ENCODE measurements at regions of chr5 and their contacts with region 1.

Region 1: GRCh38 chr5:128905571-128906110 is 59.6 kb upstream of the SLC27A6 start:
- DNase-seq: peak; percentile 90
- H3K4me3 Mint-ChIP-seq: no peak overlapping the region
- H3K27ac Mint-ChIP-seq: no peak overlapping the region
- H3K4me1 Mint-ChIP-seq: no peaks in the 10 kb centered on the region
- H3K27me3 Mint-ChIP-seq: no peaks in the 10 kb centered on the region
- CTCF ChIP-seq: peak; percentile 85

Region 2: GRCh38 chr5:128920345-128921215 is 14.9 kb after region 1 on chr5:
- CTCF ChIA-PET with region 1: interaction called, 11 read pairs
- POLR2A ChIA-PET with region 1: no interaction called
- intact Hi-C with region 1: no loop called
- DNase-seq: peak; percentile 79
- H3K4me3 Mint-ChIP-seq: no peak overlapping the region
- H3K27ac Mint-ChIP-seq: no peak overlapping the region
- H3K4me1 Mint-ChIP-seq: peaks cover 8% of the 10 kb centered on the region
- H3K27me3 Mint-ChIP-seq: peaks cover 7% of the 10 kb centered on the region
- CTCF ChIP-seq: no peak

Region 3: DNA sequence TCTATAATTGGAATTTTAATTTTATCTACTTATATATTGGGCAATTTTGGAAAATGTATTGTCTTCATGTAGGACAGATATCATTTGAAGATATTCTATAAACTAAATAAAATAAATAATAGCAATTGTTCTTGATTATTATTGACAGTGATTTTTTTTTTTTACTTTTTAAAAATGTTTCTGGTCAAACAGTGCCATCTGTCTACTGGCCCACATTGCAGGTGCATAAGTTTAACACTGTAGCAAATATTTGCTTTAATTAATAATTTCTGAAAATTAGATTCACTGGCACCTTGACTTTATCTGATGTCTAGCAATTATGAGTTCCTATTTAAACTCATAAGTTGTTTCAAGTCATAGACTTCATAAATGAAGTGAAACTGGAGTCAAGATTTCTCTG is 147.8 kb after region 1 on chr5:
- CTCF ChIA-PET with region 1: no interaction called
- POLR2A ChIA-PET with region 1: interaction called, 3 read pairs
- intact Hi-C with region 1: loop called (anchors 1 kb)
- DNase-seq: no peak
- H3K4me3 Mint-ChIP-seq: no peak overlapping the region
- H3K27ac Mint-ChIP-seq: no peak overlapping the region
- H3K4me1 Mint-ChIP-seq: peaks cover 7% of the 10 kb centered on the region
- H3K27me3 Mint-ChIP-seq: peaks cover 2% of the 10 kb centered on the region
- CTCF ChIP-seq: no peak

Region 4: DNA sequence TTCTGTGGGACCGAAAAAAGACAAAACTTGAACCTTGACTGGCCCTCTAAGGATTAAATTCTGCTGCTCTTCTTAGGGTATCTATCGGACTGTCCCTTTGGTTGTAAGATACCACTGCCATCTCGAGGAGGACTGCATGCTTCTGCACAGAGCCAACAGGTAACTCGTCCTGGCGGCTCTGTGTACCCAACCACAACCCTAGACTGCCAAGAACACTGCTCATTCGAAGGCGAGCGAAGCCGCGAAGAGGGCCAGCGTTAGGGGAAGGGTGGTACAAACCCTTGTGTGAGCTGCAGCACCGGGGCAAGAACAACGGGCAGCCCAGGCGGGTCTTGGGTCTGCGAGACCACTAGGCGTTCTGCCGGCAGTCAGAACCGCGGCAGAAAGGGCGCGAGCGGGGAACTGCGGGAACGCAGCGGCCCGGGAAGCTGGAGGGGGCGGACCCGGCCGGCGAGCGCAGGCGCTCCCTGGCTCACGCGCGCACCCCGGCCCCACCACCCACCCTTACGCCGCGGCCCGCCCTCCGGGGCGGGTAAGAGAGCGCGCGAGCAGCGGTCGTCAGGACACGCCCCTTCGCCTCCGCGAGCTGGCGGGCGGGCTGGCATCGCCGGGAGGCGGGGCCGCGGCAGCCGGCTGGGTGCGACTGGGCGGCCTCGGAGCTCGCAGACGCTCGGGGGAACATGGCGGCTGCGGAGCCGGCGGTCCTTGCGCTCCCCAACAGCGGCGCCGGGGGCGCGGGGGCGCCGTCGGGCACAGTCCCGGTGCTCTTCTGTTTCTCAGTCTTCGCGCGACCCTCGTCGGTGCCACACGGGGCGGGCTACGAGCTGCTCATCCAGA is 188.7 kb after region 1 on chr5 and contains the start of gene ISOC1:
- CTCF ChIA-PET with region 1: interaction called, 33 read pairs
- POLR2A ChIA-PET with region 1: interaction called, 5 read pairs
- intact Hi-C with region 1: loop called (anchors 1 kb)
- DNase-seq: peak; percentile 94
- H3K4me3 Mint-ChIP-seq: peak within 1 kb of the TSS; percentile 84
- H3K27ac Mint-ChIP-seq: peak within 1 kb of the TSS; percentile 46
- H3K4me1 Mint-ChIP-seq: peaks cover 20% of the 10 kb centered on the region
- H3K27me3 Mint-ChIP-seq: peaks cover 21% of the 10 kb centered on the region
- CTCF ChIP-seq: no peak
- total RNA-seq, gene ISOC1: 11.2 and 12.8 TPM in 2 replicates

Region 5: GRCh38 chr5:129125810-129126209 is 220.2 kb after region 1 on chr5:
- CTCF ChIA-PET with region 1: interaction called, 7 read pairs
- POLR2A ChIA-PET with region 1: no interaction called
- intact Hi-C with region 1: loop called (anchors 1 kb)
- DNase-seq: no peak
- H3K4me3 Mint-ChIP-seq: no peak overlapping the region
- H3K27ac Mint-ChIP-seq: no peak overlapping the region
- H3K4me1 Mint-ChIP-seq: peaks cover 8% of the 10 kb centered on the region
- H3K27me3 Mint-ChIP-seq: no peaks in the 10 kb centered on the region
- CTCF ChIP-seq: no peak

Region 6: DNA sequence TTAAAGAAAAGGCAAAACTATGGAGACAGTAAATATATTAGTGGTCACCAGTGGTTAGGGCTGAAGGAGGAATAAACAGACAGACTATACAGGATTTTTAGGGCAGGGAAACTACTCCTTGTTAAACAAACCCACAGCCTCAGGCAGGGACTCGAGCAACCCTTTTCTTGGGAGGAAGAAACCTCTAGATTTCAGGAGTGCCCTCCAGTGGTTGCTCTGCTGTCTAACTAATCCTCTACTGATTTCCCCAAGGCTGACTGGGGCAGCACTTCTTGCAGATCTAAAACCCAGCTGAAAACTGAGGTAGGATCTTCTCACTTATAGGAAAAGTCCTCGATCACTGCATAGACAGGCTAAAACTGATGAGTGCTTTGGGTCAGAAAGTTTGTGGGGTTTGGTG is 365.7 kb after region 1 on chr5:
- CTCF ChIA-PET with region 1: interaction called, 4 read pairs
- POLR2A ChIA-PET with region 1: no interaction called
- intact Hi-C with region 1: loop called (anchors 2 kb)
- DNase-seq: peak; percentile 58
- H3K4me3 Mint-ChIP-seq: no peak overlapping the region
- H3K27ac Mint-ChIP-seq: no peak overlapping the region
- H3K4me1 Mint-ChIP-seq: no peaks in the 10 kb centered on the region
- H3K27me3 Mint-ChIP-seq: peaks cover 12% of the 10 kb centered on the region
- CTCF ChIP-seq: no peak

Region 7: GRCh38 chr5:129412721-129413120 is 507.1 kb after region 1 on chr5:
- CTCF ChIA-PET with region 1: no interaction called
- POLR2A ChIA-PET with region 1: no interaction called
- intact Hi-C with region 1: no loop called
- DNase-seq: no peak
- H3K4me3 Mint-ChIP-seq: no peak overlapping the region
- H3K27ac Mint-ChIP-seq: no peak overlapping the region
- H3K4me1 Mint-ChIP-seq: no peaks in the 10 kb centered on the region
- H3K27me3 Mint-ChIP-seq: peaks cover 76% of the 10 kb centered on the region
- CTCF ChIP-seq: no peak

Region 8: DNA sequence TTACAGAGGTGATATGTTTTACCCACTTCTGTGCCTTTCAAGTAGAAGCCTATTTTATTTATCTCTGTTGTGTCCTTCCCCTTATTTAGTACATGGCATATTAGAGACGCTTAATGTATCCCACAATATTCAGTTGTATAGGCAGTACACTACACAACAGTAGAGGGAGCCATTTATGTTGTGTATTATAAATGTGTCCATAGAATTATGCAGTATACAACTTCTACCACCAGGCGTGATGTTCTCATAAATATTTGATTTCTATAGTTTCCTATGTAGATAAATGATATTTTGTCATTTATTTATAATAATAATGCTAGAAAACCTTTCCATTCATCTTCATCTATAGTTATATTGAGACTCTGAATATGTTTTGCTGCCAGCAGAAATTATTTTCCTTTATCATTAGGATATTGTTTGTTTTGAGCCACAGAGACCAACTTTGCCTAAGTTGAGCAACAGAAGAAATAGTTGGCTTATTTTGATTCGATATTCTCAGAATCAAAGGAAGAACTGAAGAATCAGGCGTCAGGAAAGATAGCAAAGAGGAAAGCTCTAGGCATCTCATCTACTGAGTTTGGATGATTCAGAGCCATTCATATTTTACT is 636.1 kb after region 1 on chr5:
- CTCF ChIA-PET with region 1: no interaction called
- POLR2A ChIA-PET with region 1: no interaction called
- intact Hi-C with region 1: loop called (anchors 10 kb)
- DNase-seq: peak; percentile 74
- H3K4me3 Mint-ChIP-seq: no peak overlapping the region
- H3K27ac Mint-ChIP-seq: no peak overlapping the region
- H3K4me1 Mint-ChIP-seq: no peaks in the 10 kb centered on the region
- H3K27me3 Mint-ChIP-seq: peaks cover 16% of the 10 kb centered on the region
- CTCF ChIP-seq: peak; percentile 60

Region 9: DNA sequence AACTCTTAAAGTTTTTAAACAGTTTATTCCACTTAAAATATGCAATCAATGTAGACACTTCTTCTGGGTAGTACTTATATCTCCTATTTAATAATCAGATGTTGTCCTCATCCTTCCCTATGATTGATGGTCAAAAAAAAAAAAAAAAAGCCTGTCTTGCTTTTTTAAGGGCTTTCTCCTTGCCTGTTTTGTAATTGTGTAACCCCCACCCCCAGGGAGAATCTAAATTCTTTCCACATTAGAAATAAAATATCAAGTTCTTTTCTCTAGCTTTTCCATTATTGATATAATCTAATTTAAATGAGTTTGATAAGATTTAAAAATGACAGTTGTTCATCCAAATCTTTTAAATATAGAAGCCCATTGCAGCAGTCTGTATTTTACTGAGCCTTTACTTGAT is 1118.4 kb after region 1 on chr5:
- CTCF ChIA-PET with region 1: no interaction called
- POLR2A ChIA-PET with region 1: no interaction called
- intact Hi-C with region 1: no loop called
- DNase-seq: no peak
- H3K4me3 Mint-ChIP-seq: no peak overlapping the region
- H3K27ac Mint-ChIP-seq: no peak overlapping the region
- H3K4me1 Mint-ChIP-seq: no peaks in the 10 kb centered on the region
- H3K27me3 Mint-ChIP-seq: no peaks in the 10 kb centered on the region
- CTCF ChIP-seq: no peak